ENCODE measurements at regions of chr5 and their contacts with region 1.

Region 1: DNA sequence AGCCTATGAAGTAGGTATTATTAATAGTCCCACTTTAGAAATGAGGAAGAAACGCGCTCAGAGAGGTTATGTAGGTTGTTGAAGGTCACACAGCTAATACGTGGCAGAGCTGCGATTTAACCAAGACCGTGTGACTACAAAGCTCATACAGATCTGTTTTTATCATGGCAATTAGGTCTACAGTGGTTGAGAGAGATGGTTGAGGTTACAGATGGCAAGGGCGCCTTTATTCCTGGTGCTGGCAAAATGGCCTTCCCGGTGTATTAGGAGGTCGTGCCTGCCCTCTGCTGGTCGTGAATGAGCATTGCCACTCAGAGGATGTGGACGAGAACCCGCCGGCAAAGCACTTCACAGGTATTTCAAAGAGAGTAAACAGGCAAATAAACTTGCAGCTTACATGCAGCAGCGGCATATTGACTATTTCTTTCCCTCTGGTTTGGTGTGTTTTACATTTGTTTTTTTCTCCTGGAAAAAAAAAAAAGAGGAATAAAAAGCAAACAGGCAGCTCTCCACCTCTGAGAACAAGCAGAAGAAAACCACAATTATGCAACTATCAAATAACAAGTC is 65.3 kb upstream of the EGFLAM start:
- DNase-seq: peak; percentile 76

Region 2: GRCh38 chr5:37412515-37413277 is 780.4 kb before region 1 on chr5:
- CTCF ChIA-PET with region 1: interaction called, 17 read pairs
- POLR2A ChIA-PET with region 1: no interaction called
- DNase-seq: peak; percentile 77